ENCODE measurements at regions of chr15 and their contacts with region 1.

Region 1: GRCh38 chr15:68080783-68081182 is 26.7 kb downstream of the PIAS1 start:
- DNase-seq: no peak
- ATAC-seq: peak; percentile 53
- H3K4me3 ChIP-seq: no peak overlapping the region
- H3K27ac ChIP-seq: no peak overlapping the region
- H3K4me1 ChIP-seq: peaks cover 15% of the 10 kb centered on the region
- H3K27me3 ChIP-seq: no peaks in the 10 kb centered on the region
- CTCF ChIP-seq: no peak
- EP300 ChIP-seq: no peak
- POLR2A ChIP-seq: no peak
- RAD21 ChIP-seq: no peak

Region 2: DNA sequence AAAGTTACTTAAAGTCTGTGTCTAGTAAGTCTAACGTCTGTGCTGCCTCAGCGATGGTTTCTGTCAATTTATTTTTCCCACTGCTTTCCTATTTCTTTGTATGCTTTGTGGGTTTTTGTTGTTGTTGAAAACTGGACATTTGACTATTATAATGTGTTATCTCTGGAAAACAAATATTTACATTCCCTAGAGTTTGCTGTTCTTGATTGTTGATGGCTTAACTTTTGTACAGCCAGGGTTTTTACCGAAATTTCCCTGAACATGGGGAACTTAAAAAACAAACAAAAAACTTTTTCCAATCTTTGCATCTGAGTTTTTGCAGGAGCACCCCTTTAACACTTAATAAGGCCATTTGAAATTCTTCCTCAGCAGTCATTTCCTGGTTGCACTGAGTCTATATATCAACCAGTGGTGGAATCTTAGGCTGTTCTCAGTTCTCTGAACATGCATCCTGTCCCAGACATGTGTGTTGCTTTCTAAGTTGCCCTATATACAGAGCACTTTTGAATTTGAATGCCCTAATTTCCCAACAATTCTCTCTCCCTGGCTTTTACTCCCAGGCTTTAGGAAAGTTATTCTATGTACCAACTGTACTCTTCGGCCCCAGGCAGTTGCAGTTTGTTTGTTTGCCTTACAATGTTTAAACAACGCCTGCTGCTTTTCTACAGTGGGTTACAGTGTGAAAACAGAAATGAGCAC is 38.5 kb before region 1 on chr15:
- CTCF ChIA-PET with region 1: no interaction called
- POLR2A ChIA-PET with region 1: no interaction called
- RAD21 ChIA-PET with region 1: no interaction called
- SMC1A ChIA-PET with region 1: no interaction called
- in situ Hi-C with region 1: no loop called
- intact Hi-C with region 1: no loop called
- DNase-seq: no peak
- ATAC-seq: peak; percentile 85
- H3K4me3 ChIP-seq: no peak overlapping the region
- H3K27ac ChIP-seq: peak overlapping the region; percentile 49
- H3K4me1 ChIP-seq: peaks cover 3% of the 10 kb centered on the region; the same call in 1 of the 2 replicates
- H3K27me3 ChIP-seq: no peaks in the 10 kb centered on the region
- CTCF ChIP-seq: no peak
- EP300 ChIP-seq: no peak
- POLR2A ChIP-seq: no peak
- RAD21 ChIP-seq: no peak

Region 3: DNA sequence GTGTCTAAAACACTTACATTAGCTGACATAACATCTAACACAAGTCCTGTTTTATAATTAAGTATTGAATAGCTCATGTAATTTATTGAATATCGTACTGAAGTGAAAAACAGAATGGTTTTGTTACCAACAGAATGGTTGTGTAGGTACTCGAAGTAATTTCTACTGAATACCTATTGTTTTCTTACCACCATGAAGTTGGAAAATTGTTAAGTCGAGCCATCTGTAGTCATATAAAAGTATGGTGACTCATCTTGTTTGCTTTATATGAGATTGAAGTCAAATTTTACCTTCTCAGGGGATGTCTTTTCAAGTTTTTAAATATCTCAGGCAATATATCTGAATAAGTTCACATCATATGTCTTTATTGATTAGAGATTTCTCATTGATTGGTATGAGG is 11.0 kb after region 1 on chr15:
- CTCF ChIA-PET with region 1: interaction called, 12 read pairs
- POLR2A ChIA-PET with region 1: interaction called, 3 read pairs
- RAD21 ChIA-PET with region 1: interaction called, 4 read pairs
- SMC1A ChIA-PET with region 1: interaction called, 8 read pairs
- in situ Hi-C with region 1: no loop called
- intact Hi-C with region 1: no loop called
- DNase-seq: no peak
- ATAC-seq: no peak
- H3K4me3 ChIP-seq: no peak overlapping the region
- H3K27ac ChIP-seq: no peak overlapping the region
- H3K4me1 ChIP-seq: no peaks in the 10 kb centered on the region
- H3K27me3 ChIP-seq: no peaks in the 10 kb centered on the region
- CTCF ChIP-seq: no peak
- EP300 ChIP-seq: no peak
- POLR2A ChIP-seq: no peak
- RAD21 ChIP-seq: no peak

Region 4: DNA sequence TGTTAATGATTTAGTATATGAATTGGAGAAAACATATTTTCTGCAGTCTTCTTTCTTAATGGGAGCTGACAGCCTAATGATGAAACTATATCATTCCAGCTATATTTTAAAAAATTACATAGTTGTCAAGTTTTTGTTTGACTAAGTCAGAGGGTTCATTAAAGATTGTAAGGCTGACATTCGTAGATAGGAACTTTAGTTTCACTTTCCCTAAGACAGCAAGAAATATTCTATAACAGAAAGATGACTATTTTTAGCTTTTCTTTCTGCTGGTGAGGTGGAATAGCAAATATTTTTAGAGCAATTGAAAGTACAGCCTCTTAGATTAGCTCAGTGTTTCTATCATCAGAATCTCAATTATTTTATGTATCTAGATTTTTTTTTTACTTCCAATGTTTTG is 33.6 kb after region 1 on chr15:
- CTCF ChIA-PET with region 1: no interaction called
- POLR2A ChIA-PET with region 1: interaction called, 5 read pairs
- RAD21 ChIA-PET with region 1: interaction called, 6 read pairs
- SMC1A ChIA-PET with region 1: interaction called, 14 read pairs
- in situ Hi-C with region 1: no loop called
- intact Hi-C with region 1: no loop called
- DNase-seq: no peak
- ATAC-seq: peak; percentile 70
- H3K4me3 ChIP-seq: peak overlapping the region; percentile 47; the same call in 1 of the 2 replicates
- H3K27ac ChIP-seq: peak overlapping the region; percentile 24; the same call in 1 of the 2 replicates
- H3K4me1 ChIP-seq: peaks cover 17% of the 10 kb centered on the region
- H3K27me3 ChIP-seq: no peaks in the 10 kb centered on the region
- CTCF ChIP-seq: no peak
- EP300 ChIP-seq: no peak
- POLR2A ChIP-seq: no peak
- RAD21 ChIP-seq: no peak